Ascending aorta (tissue), 2 donors: ENCODE measurements at regions of chr20 and their contacts with region 1.

Region 1: GRCh38 chr20:59032023-59032712 is at the start of gene ATP5F1E:
- DNase-seq: peak; percentile 85 to 98
- H3K4me3 ChIP-seq: peak within 1 kb of the TSS; percentile 73 to 92
- H3K27ac ChIP-seq: peak within 1 kb of the TSS; percentile 72 to 87
- H3K4me1 ChIP-seq: peaks cover 0 to 22% of the 10 kb centered on the region in 2 donors
- H3K27me3 ChIP-seq: no peaks in the 10 kb centered on the region
- CTCF ChIP-seq: no peak
- total RNA-seq, gene ATP5F1E: 12.7 TPM

Region 2: DNA sequence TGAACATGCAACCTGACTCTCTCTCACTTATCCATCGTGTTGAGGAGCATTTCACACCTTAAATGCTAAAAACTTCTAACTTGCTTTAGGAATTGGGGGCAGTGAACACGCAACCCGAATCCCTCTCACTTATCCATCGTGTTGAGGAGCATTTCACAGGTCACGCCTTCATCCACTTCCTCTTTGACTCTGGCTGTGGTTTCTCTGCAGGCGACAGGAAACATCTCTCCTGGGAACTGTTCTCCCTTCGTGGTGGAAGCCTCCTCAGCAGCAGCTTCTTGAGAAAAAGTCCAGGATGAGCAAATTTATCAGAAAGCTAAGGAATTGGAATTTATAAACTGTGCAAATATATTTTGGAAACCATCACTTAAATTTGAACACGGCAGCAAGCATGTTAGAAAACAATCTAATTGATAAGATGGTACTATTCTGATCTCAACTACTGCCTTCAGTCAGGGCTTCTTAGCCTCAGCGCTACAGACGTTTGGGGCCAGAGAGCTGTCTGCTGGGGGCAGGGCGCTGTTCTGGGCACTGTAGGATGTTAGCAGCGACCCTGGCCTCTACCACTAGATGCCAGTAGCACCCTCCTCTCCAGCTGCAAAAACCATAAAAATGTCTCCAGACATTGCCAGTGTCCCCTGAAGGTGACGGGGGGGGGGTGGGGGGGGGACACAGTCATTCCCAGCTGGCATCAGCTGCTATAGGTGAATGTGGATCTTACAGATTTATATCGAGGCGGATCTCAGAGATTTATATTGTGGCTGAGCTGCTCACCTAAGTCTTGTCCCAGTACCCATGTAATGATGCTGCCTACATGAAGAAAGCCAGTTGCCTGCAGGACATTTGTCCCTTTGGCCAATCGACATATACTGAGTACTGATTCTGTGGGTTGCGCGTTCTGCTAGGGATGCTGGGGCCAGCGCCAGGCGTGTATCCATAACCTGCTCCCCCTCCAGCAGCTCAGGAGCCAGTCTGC is 1533.5 kb before region 1 on chr20:
- intact Hi-C with region 1: loop called (anchors 10 kb)
- DNase-seq: no peak
- H3K4me3 ChIP-seq: no peak overlapping the region
- H3K27ac ChIP-seq: no peak overlapping the region
- H3K4me1 ChIP-seq: peaks cover 4 to 9% of the 10 kb centered on the region in 2 donors
- H3K27me3 ChIP-seq: no peaks in the 10 kb centered on the region
- CTCF ChIP-seq: peak in 1 of 3 experiments; percentile 5

Region 3: GRCh38 chr20:58907399-58908137 is 124.6 kb before region 1 on chr20:
- intact Hi-C with region 1: loop called (anchors 5 kb)
- DNase-seq: peak; percentile 90 to 98
- H3K4me3 ChIP-seq: peak overlapping the region; percentile 31 to 51
- H3K27ac ChIP-seq: peak overlapping the region; percentile 83 to 92
- H3K4me1 ChIP-seq: peaks cover 15 to 25% of the 10 kb centered on the region in 2 donors
- H3K27me3 ChIP-seq: no peaks in the 10 kb centered on the region
- CTCF ChIP-seq: no peak

Region 4: DNA sequence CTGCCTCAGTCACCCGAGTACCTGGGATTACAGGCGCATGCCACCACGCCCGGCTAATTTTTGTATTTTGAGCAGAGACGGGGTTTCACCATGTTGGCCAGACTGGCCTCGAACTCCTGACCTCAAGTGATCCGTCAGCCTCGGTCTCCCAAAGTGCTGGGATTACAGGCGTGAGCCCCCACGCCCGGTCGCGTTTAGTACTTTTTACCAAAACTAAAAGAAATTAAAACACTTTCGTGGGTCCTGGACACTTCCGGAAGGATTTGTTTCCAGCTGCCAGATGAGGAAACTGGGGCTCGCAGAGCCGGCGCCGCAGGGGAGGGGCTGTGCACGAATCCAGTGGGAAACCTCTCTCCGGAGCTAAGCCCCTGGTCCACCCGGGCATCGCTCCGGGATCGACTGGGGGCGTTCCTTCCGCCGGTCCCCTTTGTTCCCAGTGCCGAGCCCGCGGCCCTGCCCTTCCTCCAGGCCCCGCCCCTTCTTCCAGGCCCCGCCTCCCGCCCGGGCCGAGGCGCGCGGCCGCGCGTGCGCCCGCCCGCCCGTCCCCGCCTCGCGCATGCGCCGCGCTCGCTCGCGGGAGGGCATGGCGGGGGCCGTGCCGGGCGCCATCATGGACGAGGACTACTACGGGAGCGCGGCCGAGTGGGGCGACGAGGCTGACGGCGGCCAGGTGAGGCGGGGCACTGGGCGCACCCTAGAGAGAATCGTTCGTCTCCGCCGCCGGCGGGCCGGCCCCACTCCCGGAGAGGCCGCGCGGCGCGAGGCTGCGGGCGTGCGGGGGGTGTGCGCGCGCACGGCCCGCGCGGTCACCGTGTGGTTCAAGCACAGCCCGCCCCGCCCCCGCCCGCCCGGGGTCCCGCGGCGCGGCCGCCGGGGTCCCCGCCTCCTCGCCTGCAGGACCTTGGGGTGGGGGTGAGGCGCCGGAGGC is 51.2 kb before region 1 on chr20 and contains the start of gene NELFCD:
- intact Hi-C with region 1: loop called (anchors 1 kb)
- DNase-seq: peak in 1 of 2 donors; percentile 92
- H3K4me3 ChIP-seq: peak within 1 kb of the TSS; percentile 85 to 96
- H3K27ac ChIP-seq: peak within 1 kb of the TSS; percentile 83 to 85
- H3K4me1 ChIP-seq: peaks cover 3 to 15% of the 10 kb centered on the region in 2 donors
- H3K27me3 ChIP-seq: no peaks in the 10 kb centered on the region
- CTCF ChIP-seq: no peak
- total RNA-seq, gene NELFCD: 20.8 TPM

Region 5: GRCh38 chr20:59006864-59007664 is 25.1 kb before region 1 on chr20 and contains the start of gene CTSZ:
- intact Hi-C with region 1: loop called (anchors 2 kb)
- DNase-seq: peak in 1 of 2 donors; percentile 73
- H3K4me3 ChIP-seq: peak within 1 kb of the TSS; percentile 73 to 82
- H3K27ac ChIP-seq: peak within 1 kb of the TSS; percentile 88
- H3K4me1 ChIP-seq: peaks cover 16 to 38% of the 10 kb centered on the region in 2 donors
- H3K27me3 ChIP-seq: no peaks in the 10 kb centered on the region
- CTCF ChIP-seq: no peak
- total RNA-seq, gene CTSZ: 342 TPM

Region 6: DNA sequence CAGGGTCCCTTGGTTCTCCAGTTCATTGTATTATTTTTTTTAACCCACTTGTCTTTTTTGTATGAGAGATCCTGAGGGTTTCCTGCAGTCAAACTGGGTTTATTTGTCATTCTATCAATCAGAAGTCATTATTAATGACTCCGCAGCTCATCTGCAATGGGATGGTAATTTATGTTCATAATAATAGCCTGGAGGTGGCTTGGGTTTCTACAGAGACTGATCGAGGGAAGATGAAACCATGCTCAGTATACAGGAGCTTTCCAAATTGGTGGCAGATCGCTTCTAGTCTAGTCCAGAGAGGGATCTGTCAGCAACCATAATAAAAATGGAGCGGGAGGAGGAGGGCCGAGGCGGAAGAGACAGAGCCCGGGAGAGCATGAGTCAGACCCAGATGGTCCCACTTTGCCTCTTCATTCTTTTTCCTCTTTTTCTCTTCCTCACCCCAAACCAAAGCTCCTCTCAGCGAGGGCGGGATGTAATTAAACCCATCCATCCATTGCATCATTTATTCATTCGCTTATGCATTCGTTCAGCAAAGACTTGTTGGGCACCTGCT is 290.8 kb after region 1 on chr20:
- intact Hi-C with region 1: no loop called
- DNase-seq: no peak
- H3K4me3 ChIP-seq: no peak overlapping the region
- H3K27ac ChIP-seq: no peak overlapping the region
- H3K4me1 ChIP-seq: no peaks in the 10 kb centered on the region
- H3K27me3 ChIP-seq: no peaks in the 10 kb centered on the region
- CTCF ChIP-seq: no peak